ENCODE measurements at regions of chr1 and their contacts with region 1.

Region 1: DNA sequence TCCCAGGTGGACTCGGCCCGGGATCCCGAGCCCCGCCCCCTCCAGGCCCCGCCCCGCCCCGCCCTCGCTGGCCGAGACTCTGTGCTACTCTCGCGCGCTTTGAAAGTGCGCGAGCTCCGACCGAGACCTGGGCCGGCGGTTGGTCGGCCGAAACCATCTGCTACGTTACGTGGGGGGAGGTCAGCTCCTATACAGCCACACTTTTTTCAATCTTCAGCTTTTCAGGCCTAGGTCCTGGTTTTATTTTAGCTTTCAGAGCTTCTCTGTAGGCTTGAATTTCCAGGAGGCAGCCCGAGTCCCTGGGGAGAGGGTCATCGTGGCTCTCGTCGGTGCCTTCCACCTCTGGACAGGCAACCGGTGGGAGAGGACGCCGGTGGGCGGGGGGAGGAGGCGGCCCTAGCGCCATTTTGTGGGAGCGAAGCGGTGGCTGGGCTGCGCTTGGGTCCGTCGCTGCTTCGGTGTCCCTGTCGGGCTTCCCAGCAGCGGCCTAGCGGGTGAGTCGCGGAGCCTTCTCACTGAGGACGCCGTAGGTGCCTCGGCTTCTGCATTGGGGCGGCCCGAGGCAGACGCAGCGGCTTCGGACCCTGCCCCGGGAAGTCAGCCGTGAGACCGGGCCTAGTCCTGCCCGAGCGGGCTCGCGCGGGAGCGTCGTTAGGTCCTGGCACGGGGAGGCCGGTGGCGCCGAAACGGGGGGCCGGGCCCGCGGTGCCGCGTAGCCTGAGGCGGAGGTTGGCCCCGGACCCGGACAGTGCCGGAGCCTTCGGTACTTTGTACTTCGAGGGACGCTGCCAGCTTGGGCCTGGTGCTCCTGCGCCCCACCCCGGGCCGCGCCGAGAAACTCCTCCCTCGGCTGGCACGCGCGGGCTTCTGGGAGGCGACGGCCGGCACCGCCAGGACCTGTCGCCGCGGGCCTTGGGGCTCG is at the start of gene TARDBP:
- DNase-seq: peak; percentile 92
- ATAC-seq: peak; percentile 99
- total RNA-seq, gene TARDBP: 165 TPM

Region 2: DNA sequence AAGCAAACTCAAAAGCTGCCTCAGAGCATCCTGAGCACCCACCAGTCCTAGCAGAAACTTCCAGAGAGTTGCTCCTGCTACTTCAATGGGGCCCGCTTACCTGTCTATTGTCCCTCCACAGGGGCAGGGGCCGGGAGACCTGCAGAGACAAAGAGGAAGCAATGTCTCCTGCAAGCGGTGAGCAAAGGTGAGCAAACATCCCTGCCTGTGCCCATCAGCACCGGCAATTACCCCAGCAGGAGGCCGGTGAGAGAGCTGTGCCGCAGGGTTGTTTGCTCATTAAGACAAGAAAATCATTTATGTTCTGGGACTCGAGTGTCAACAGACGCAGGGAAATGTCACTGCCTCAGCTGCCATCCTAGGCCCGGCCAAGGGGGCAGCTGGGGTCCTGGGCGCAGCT is 53.9 kb before region 1 on chr1:
- intact Hi-C with region 1: no loop called
- DNase-seq: no peak
- ATAC-seq: no peak

Region 3: GRCh38 chr1:10975567-10976326 is 36.8 kb before region 1 on chr1:
- intact Hi-C with region 1: loop called (anchors 5 kb)
- DNase-seq: no peak
- ATAC-seq: no peak

Measured in sciatic nerve (tissue), 2 donors.